CD14-positive monocyte (primary cell): ENCODE measurements at regions of chr4 and their contacts with region 1.

Region 1: GRCh38 chr4:38620790-38621684 is 43.0 kb upstream of the KLF3 start:
- DNase-seq: peak; percentile 88 to 91 (median 90)
- H3K4me3 ChIP-seq: peak overlapping the region in 1 of 3 experiments; percentile 3
- H3K4me3 Mint-ChIP-seq: no peak overlapping the region
- H3K27ac ChIP-seq: peak overlapping the region; percentile 69 to 74
- H3K27ac Mint-ChIP-seq: peak overlapping the region; percentile 80 to 96 (median 92)
- H3K4me1 ChIP-seq: peaks cover 43 to 56% of the 10 kb centered on the region in 2 donors
- H3K4me1 Mint-ChIP-seq: peaks cover 48% of the 10 kb centered on the region
- H3K27me3 ChIP-seq: no peaks in the 10 kb centered on the region
- H3K27me3 Mint-ChIP-seq: peaks cover 0 to 2% (median 0%) of the 10 kb centered on the region in 3 donors
- CTCF ChIP-seq: no peak

Region 2: DNA sequence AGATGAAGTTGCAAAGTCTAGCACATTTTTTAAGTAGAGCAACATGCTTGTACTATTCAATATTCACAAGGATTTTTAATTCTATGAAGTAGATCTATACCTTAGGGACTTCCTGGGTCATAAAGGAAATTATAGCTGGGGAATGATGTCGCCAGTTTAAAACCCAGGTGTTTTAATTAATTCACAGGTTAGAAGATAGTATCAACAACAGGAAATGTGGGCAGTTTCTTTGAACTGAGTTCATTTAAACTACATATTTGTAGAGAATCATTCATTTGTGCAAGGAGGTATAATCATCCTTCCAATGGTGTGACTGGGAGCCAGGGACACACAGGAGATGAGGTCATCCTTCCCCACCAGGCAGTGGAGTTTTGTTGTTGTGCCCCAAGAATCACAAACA is 138.3 kb before region 1 on chr4:
- intact Hi-C with region 1: no loop called
- DNase-seq: no peak
- H3K4me3 ChIP-seq: no peak overlapping the region
- H3K4me3 Mint-ChIP-seq: no peak overlapping the region
- H3K27ac ChIP-seq: no peak overlapping the region
- H3K27ac Mint-ChIP-seq: no peak overlapping the region
- H3K4me1 ChIP-seq: no peaks in the 10 kb centered on the region
- H3K4me1 Mint-ChIP-seq: no peaks in the 10 kb centered on the region
- H3K27me3 ChIP-seq: no peaks in the 10 kb centered on the region
- H3K27me3 Mint-ChIP-seq: peaks cover 0 to 3% (median 2%) of the 10 kb centered on the region in 3 donors
- CTCF ChIP-seq: no peak

Region 3: DNA sequence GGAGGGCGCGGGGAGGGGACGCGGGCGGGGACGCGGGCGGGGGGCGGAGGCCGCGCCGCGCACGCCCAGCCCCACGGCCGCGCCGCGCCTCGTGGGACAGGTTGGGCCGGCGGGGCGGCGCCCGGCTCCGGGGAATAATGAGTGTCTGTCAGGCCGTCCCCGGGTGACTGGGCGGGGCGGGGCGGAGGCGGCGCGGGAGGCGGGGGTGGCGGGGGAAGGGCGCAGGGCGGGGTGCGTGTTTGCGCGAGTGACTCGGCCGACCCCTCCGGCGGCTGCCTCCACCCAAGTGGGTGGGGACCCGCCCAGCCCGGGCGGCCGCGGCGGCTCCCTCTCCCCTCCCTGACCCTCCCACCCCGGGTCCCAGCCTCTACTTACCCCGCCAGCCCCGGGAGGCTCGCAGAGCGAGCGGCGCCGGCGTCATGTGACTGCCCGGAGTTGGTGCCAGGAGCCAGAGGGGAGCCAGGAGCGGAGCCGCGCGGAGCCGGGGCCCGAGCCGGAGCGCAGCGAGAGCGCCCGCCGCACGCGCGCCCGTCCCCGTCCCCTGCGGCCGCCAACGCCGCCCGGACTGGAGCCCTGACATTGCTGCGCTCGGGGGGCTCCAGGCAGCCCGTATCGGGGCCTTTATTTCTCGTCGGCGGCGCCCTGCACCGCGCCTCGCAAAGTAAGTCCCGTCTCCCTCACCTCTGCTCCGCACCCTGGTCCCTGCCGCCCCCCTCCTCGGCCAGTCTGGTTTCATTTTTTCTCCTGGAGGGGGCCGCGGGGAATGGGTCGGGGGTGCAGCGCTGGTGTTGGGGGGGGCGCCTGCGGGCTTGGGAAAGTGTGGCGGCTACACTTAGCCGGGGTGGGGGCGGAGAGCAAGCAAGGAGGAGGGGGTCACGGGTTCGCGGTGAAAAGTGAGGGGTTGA is 43.0 kb after region 1 on chr4 and contains the start of gene KLF3:
- intact Hi-C with region 1: loop called in 1 of 2 experiments (anchors 5 kb)
- DNase-seq: peak; percentile 87 to 90 (median 89)
- H3K4me3 ChIP-seq: peak within 1 kb of the TSS; percentile 84 to 98 (median 94)
- H3K4me3 Mint-ChIP-seq: peak within 1 kb of the TSS; percentile 99
- H3K27ac ChIP-seq: peak within 1 kb of the TSS; percentile 93 to 95
- H3K27ac Mint-ChIP-seq: peak within 1 kb of the TSS; percentile 90 to 97 (median 94)
- H3K4me1 ChIP-seq: peaks cover 43 to 55% of the 10 kb centered on the region in 2 donors
- H3K4me1 Mint-ChIP-seq: peaks cover 55% of the 10 kb centered on the region
- H3K27me3 ChIP-seq: no peaks in the 10 kb centered on the region
- H3K27me3 Mint-ChIP-seq: peaks cover 0 to 8% (median 1%) of the 10 kb centered on the region in 3 donors
- CTCF ChIP-seq: no peak
- polyA plus RNA-seq, gene KLF3: 46.3 to 95.7 (median 53.9) TPM